ENCODE measurements at regions of chr12 and their contacts with region 1.

Region 1: DNA sequence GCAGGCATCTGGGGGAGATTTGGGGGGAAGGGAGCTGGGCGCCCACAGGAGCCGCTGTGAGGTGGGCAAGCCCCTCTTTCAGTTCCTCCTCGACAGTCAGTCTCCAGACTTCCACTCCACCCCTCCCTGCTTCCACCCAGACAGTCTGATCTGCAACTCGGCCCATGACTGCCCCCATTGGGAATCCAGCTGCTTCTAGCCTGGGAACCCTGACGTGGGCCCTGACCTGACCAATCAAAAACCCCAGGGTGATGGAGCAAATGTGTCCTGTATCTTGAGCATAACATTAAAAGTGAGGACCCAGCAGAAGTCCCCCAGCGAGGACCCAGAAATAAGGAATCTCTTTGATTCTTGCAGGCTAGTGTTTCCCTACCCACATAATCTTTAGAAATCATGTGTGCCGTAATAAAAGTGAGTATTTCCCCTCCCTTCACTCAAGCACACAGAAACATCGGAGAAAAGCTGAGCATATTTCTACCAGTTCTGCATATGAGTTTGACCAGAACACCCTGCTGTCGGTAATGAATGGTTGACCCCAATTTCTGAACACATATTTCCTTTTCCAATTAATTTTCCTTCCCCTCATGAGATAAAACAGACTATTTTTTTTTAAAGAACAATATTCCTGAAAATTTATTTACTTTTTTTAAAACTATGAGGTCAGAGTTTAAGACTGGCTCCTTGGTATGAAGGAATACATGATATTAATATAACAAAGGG is 6.4 kb downstream of the SSH1 start:
- DNase-seq: peak; percentile 79
- ATAC-seq: peak; percentile 82
- H3K4me3 ChIP-seq: no peak overlapping the region
- H3K27ac ChIP-seq: peak overlapping the region; percentile 74
- H3K4me1 ChIP-seq: peaks cover 36% of the 10 kb centered on the region
- H3K27me3 ChIP-seq: no peaks in the 10 kb centered on the region
- CTCF ChIP-seq: peak in 2 of 3 experiments; percentile 27 to 56; a peak in 4 of 6 replicates
- EP300 ChIP-seq: peak; percentile 66 to 84; a peak in 3 of 4 replicates
- POLR2A ChIP-seq: no peak
- RAD21 ChIP-seq: peak; percentile 67; the same call in 1 of the 2 replicates

Region 2: DNA sequence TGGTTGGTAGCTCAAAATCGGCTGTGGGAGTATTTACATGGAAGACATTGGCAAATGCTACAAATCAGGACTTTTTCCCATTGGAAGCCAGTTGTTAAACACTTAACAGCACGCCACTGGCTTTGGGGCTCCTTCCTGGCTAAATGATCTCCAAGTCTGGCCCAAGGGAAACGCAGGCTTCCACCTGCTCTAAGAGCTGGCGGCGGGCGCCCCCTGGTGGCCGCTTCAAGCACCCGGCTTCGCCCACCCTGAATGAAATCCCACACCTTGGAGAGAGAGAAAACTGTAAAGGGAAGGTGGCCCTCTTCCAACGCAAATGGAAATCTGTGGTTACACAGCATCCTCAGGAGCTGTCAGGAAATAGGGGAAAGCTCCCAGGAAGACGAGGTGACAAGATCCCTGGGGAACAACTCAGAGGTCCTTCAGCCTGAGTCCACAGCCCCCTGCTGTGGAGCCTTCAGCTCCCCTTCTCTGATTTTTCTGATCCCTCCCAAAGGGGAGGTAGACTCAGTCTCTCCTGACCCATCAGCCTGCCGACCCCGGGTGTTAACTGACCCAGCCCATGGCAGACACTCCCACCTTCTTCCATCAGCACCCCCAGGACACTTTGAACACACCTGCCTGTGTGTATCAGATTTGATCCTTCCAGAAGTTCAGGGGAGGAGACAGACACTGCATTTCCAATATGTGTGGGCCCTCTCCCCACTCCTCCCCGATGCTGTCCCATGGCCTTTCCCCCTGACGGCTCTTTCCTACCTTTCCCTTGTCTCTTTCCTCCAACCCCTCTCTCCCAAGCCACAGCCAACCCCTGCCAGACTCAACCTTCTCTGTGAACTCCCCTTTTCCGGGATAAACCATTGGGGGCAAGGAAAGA is 232.7 kb before region 1 on chr12:
- CTCF ChIA-PET with region 1: interaction called, 12 read pairs
- POLR2A ChIA-PET with region 1: interaction called, 3 read pairs
- RAD21 ChIA-PET with region 1: interaction called, 12 read pairs
- SMC1A ChIA-PET with region 1: interaction called, 3 read pairs
- in situ Hi-C with region 1: no loop called
- intact Hi-C with region 1: no loop called
- DNase-seq: no peak
- ATAC-seq: peak; percentile 73
- H3K4me3 ChIP-seq: no peak overlapping the region
- H3K27ac ChIP-seq: peak overlapping the region; percentile 99
- H3K4me1 ChIP-seq: peaks cover 47% of the 10 kb centered on the region
- H3K27me3 ChIP-seq: no peaks in the 10 kb centered on the region
- CTCF ChIP-seq: peak; percentile 92 to 95 (median 94)
- EP300 ChIP-seq: no peak
- POLR2A ChIP-seq: no peak
- RAD21 ChIP-seq: peak; percentile 96

Region 3: GRCh38 chr12:108744021-108744897 is 106.8 kb before region 1 on chr12:
- CTCF ChIA-PET with region 1: no interaction called
- POLR2A ChIA-PET with region 1: no interaction called
- RAD21 ChIA-PET with region 1: no interaction called
- SMC1A ChIA-PET with region 1: no interaction called
- in situ Hi-C with region 1: no loop called
- intact Hi-C with region 1: no loop called
- DNase-seq: no peak
- ATAC-seq: no peak
- H3K4me3 ChIP-seq: no peak overlapping the region
- H3K27ac ChIP-seq: no peak overlapping the region
- H3K4me1 ChIP-seq: no peaks in the 10 kb centered on the region
- H3K27me3 ChIP-seq: no peaks in the 10 kb centered on the region
- CTCF ChIP-seq: no peak
- EP300 ChIP-seq: no peak
- POLR2A ChIP-seq: no peak
- RAD21 ChIP-seq: no peak

Region 4: DNA sequence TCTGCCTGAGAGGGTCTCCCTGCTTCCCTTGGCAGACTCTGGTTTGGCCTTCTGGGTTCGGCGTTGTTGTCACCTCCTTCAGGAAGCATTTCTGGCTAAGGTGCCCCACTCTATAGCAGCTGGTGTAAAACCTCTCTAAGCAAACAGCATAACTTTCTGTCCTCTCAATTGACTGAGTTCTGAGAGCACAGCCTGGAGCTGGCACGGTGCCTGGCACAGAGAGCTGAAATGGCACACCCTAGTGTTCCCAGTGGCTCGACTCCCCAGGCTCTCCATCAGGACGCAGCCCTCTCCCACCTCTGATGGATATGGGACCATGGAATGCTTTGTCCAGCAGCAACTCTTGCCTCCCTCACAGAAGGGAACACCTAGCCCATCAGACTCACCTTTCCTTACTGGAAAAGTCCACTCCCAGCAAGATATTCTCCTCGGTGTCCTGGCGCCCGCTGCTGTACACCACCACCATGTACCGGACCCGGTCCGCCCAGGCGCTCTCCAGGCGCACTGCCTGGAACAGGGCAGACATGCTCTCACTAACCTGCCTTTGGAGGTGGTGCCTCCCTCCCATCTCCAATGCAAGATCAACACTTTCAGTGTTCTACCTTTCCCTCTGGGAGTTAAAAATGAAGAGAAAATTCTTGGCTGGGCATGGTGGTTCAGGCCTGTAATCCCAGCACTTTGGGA is 34.2 kb before region 1 on chr12:
- CTCF ChIA-PET with region 1: interaction called, 7 read pairs
- POLR2A ChIA-PET with region 1: interaction called, 19 read pairs
- RAD21 ChIA-PET with region 1: interaction called, 16 read pairs
- SMC1A ChIA-PET with region 1: interaction called, 14 read pairs
- in situ Hi-C with region 1: no loop called
- intact Hi-C with region 1: loop called (anchors 5 kb)
- DNase-seq: no peak
- ATAC-seq: no peak
- H3K4me3 ChIP-seq: no peak overlapping the region
- H3K27ac ChIP-seq: no peak overlapping the region
- H3K4me1 ChIP-seq: peaks cover 12% of the 10 kb centered on the region
- H3K27me3 ChIP-seq: no peaks in the 10 kb centered on the region
- CTCF ChIP-seq: no peak
- EP300 ChIP-seq: no peak
- POLR2A ChIP-seq: no peak
- RAD21 ChIP-seq: no peak

Region 5: GRCh38 chr12:108833355-108833733 is 17.7 kb before region 1 on chr12:
- CTCF ChIA-PET with region 1: interaction called, 26 read pairs
- POLR2A ChIA-PET with region 1: interaction called, 40 read pairs
- RAD21 ChIA-PET with region 1: interaction called, 34 read pairs
- SMC1A ChIA-PET with region 1: interaction called, 52 read pairs
- in situ Hi-C with region 1: no loop called
- intact Hi-C with region 1: loop called (anchors 2 kb)
- DNase-seq: no peak
- ATAC-seq: no peak
- H3K4me3 ChIP-seq: no peak overlapping the region
- H3K27ac ChIP-seq: no peak overlapping the region
- H3K4me1 ChIP-seq: peaks cover 34% of the 10 kb centered on the region
- H3K27me3 ChIP-seq: no peaks in the 10 kb centered on the region
- CTCF ChIP-seq: no peak
- EP300 ChIP-seq: no peak
- POLR2A ChIP-seq: no peak
- RAD21 ChIP-seq: no peak

Region 6: GRCh38 chr12:108950991-108951739 is 100.2 kb after region 1 on chr12:
- CTCF ChIA-PET with region 1: interaction called, 13 read pairs
- POLR2A ChIA-PET with region 1: no interaction called
- RAD21 ChIA-PET with region 1: interaction called, 5 read pairs
- SMC1A ChIA-PET with region 1: no interaction called
- in situ Hi-C with region 1: no loop called
- intact Hi-C with region 1: no loop called
- DNase-seq: peak; percentile 38
- ATAC-seq: peak; percentile 97
- H3K4me3 ChIP-seq: no peak overlapping the region
- H3K27ac ChIP-seq: no peak overlapping the region
- H3K4me1 ChIP-seq: peaks cover 3% of the 10 kb centered on the region; the same call in 1 of the 2 replicates
- H3K27me3 ChIP-seq: no peaks in the 10 kb centered on the region; a peak in 1 of 4 replicates
- CTCF ChIP-seq: peak; percentile 85 to 87 (median 86)
- EP300 ChIP-seq: no peak
- POLR2A ChIP-seq: no peak
- RAD21 ChIP-seq: peak; percentile 92

Measured in GM12878 (cell line).